Posterior vena cava (tissue), 2 donors: ENCODE measurements at regions of chr21 and their contacts with region 1.

Region 1: DNA sequence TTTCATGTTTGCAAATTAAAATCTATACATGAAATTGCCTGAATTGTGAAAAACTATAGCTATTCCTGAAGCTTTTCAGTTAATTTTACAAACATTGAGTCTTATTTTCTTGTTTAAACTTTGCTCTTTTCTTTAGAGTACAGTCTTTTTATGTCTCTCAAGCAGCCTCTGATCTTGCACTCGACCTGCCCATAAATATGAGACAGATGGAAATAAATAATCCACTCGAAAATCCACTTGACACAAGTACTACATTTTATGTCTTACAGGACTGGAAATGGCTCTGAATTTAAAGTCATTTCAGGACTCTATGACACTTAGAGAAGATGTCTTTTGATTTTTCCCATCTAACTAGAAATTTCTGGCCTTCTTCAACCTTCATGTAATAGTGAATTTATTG is 283.8 kb downstream of the USP25 start:
- DNase-seq: no peak

Region 2: DNA sequence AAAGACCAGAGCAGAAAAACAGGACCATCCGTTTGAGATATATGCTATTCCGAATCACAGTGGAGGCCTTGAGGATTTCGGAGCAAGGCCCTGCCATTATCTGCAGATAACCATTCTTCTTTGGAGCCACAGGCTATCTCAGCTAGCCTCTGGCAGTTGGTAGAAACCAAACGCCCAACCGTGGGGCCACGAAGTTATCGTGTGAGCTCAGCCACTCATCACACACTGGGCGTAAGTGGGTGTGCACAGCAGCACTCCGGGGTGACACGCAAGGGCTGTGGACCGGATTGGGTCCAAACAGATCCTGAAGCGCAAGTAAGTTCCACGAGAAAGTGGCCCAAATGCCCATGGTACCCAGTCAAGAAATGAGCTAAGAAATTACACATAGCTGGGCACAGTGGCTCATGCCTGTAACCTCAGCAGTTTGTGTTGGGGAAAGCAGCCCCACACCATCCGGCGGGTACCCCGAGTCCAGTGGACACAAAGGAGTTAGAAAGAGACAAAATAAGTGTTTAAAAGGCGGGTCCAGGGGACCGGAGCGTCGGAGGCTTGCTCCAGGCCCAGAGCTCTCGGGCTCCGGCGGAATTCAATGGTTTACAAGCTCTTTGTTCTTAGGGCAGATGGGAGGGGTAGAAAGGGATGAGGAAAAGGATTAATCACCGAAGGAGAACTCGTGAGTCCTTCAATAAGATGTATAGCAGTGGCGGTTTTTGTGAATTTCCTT is 1933.4 kb before region 1 on chr21:
- intact Hi-C with region 1: loop called in 1 of 2 experiments (anchors 5 kb)
- DNase-seq: no peak

Region 3: GRCh38 chr21:16551101-16551695 is 537.6 kb after region 1 on chr21:
- intact Hi-C with region 1: no loop called
- DNase-seq: no peak